ENCODE measurements at regions of chr1 and their contacts with region 1.

Region 1: GRCh38 chr1:117857434-117857833 is 72.0 kb downstream of the GDAP2 start:
- DNase-seq: no peak
- H3K4me3 ChIP-seq: no peak overlapping the region
- H3K27ac ChIP-seq: no peak overlapping the region
- H3K4me1 ChIP-seq: no peaks in the 10 kb centered on the region
- H3K27me3 ChIP-seq: no peaks in the 10 kb centered on the region
- CTCF ChIP-seq: no peak

Region 2: GRCh38 chr1:117795190-117795589 is 62.2 kb before region 1 on chr1:
- CTCF ChIA-PET with region 1: no interaction called
- dilution Hi-C with region 1: no loop called
- in situ Hi-C with region 1: no loop called
- intact Hi-C with region 1: loop called (anchors 5 kb)
- DNase-seq: peak; percentile 96
- H3K4me3 ChIP-seq: no peak overlapping the region
- H3K27ac ChIP-seq: no peak overlapping the region
- H3K4me1 ChIP-seq: peaks cover 21% of the 10 kb centered on the region
- H3K27me3 ChIP-seq: no peaks in the 10 kb centered on the region
- CTCF ChIP-seq: peak in 1 of 2 donors; percentile 13

Region 3: GRCh38 chr1:117905020-117905419 is 47.6 kb after region 1 on chr1:
- CTCF ChIA-PET with region 1: no interaction called
- dilution Hi-C with region 1: no loop called
- in situ Hi-C with region 1: no loop called
- intact Hi-C with region 1: no loop called
- DNase-seq: no peak
- H3K4me3 ChIP-seq: no peak overlapping the region
- H3K27ac ChIP-seq: no peak overlapping the region
- H3K4me1 ChIP-seq: no peaks in the 10 kb centered on the region
- H3K27me3 ChIP-seq: no peaks in the 10 kb centered on the region
- CTCF ChIP-seq: no peak